GM12878 (cell line): ENCODE measurements at regions of chr13 and their contacts with region 1.

Region 1: DNA sequence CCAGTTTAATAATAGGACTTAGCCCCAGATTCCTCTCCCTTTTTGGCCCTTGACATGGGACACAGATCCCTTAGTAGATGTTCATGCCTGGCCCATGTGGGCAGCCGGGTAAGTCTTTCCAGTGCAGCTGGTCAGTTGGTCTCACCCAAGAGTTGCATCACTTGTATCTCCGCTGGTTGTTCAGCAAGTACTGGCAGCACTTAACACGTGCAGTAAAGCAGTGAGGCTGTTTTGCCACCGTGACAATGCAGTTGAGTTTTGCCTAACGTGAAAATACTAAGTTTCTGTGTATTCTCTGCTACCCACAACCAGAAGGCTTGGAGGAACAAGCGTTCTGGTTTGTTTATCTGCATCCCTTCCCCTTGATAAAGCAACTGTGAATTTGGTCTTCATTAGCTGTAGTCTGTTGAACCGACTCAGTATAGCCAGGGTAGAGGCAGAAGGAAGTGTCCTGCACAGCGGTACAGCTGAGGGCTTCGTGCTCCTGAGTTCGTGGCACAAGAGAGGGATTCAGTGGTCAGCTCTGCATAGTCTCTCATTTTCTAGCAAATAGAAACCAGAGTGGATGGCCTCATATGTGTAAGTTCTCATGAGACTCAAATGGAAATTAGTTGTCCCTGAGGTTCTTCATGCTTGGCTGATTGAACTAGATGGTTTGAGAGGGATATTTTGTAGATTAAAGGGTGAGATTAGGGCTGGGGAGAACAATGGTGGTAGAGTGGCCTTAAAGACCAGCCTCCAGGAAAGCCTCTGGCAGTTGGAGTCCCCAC is 50.3 kb downstream of the ARHGEF7 start:
- DNase-seq: no peak
- ATAC-seq: peak; percentile 77
- H3K4me3 ChIP-seq: peak overlapping the region; percentile 36; the same call in 1 of the 2 replicates
- H3K27ac ChIP-seq: peak overlapping the region; percentile 66
- H3K4me1 ChIP-seq: peaks cover 53% of the 10 kb centered on the region
- H3K27me3 ChIP-seq: no peaks in the 10 kb centered on the region
- CTCF ChIP-seq: no peak
- EP300 ChIP-seq: no peak
- POLR2A ChIP-seq: no peak
- RAD21 ChIP-seq: no peak

Region 2: DNA sequence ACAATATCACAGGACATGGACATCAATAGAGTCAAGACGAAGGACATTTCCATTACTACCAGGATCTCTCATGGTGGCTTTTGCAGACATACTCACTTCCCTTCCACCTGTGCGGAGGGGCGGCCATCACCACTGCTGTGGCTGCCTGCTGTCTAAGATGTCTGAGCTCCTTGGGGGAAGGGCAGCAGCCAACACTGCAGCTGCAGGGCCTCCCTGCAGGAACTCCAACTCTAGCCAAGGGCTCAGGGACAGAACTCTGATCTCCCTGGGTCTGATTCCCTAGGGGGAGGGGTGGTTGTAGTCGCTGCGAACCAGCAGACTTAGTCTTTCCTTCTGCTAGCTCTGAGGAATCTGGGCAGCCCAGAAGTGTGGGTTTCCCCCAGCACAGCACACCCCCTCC is 171.6 kb before region 1 on chr13:
- CTCF ChIA-PET with region 1: no interaction called
- POLR2A ChIA-PET with region 1: no interaction called
- RAD21 ChIA-PET with region 1: no interaction called
- SMC1A ChIA-PET with region 1: no interaction called
- in situ Hi-C with region 1: no loop called
- intact Hi-C with region 1: no loop called
- DNase-seq: no peak
- ATAC-seq: no peak
- H3K4me3 ChIP-seq: no peak overlapping the region
- H3K27ac ChIP-seq: no peak overlapping the region
- H3K4me1 ChIP-seq: no peaks in the 10 kb centered on the region
- H3K27me3 ChIP-seq: no peaks in the 10 kb centered on the region
- CTCF ChIP-seq: no peak
- EP300 ChIP-seq: no peak
- POLR2A ChIP-seq: no peak
- RAD21 ChIP-seq: no peak

Region 3: DNA sequence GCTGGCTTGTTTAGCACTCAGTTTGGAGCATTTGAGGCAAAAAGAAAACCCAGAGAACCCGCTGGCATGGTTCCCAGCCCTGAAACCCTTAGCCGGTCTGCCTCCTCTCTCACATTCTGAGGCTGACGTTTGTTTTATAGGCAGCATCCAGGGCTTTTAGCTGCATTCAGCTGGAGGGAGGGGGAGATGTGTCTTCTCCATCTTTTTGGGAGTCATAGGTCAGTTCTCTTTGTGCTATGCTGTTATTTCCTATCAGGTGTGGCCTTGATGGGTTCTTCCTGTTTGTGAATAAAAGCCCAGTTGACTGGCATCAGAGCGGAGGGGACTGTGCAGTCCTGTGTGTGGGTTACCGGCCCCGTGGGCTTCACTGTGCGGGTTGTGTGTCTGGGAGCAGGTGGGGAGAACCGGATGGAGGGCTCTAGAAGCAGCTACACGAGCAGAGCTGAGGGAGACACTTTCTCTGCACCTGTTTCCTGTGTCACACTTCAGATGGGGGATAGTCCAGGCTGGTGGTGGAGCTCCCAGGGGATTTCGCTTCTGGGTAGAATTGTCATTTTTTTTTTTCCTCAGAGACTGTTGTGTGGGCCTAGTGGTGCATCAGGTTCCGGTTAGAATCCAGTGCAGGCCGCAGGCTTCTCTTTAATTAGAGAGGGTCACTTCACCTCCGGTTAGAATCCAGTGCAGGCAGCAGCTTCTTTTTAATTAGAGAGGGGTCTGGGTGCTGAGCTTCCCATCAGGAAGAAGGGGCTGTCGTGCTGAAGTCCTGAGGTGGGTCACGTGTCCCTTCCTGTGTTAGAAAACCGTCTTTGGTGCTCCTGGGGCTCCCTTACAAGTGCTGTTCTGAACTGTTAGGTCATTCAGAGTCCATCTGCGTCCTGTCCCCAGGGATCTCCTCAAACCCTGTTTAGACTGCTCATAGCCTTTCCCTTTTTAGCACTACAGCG is 19.3 kb after region 1 on chr13:
- CTCF ChIA-PET with region 1: interaction called, 5 read pairs
- POLR2A ChIA-PET with region 1: interaction called, 13 read pairs
- RAD21 ChIA-PET with region 1: interaction called, 16 read pairs
- SMC1A ChIA-PET with region 1: interaction called, 36 read pairs
- in situ Hi-C with region 1: no loop called
- intact Hi-C with region 1: loop called (anchors 1 kb)
- DNase-seq: peak; percentile 93
- ATAC-seq: peak; percentile 91
- H3K4me3 ChIP-seq: peak overlapping the region; percentile 67
- H3K27ac ChIP-seq: peak overlapping the region; percentile 70
- H3K4me1 ChIP-seq: peaks cover 47% of the 10 kb centered on the region
- H3K27me3 ChIP-seq: no peaks in the 10 kb centered on the region
- CTCF ChIP-seq: no peak
- EP300 ChIP-seq: peak; percentile 59 to 77; a peak in 3 of 4 replicates
- POLR2A ChIP-seq: peak; percentile 58
- RAD21 ChIP-seq: no peak